ENCODE measurements at regions of chr5 and their contacts with region 1.

Region 1: GRCh38 chr5:149932445-149933350 is 11.9 kb downstream of the PDE6A start:
- DNase-seq: peak; percentile 13
- ATAC-seq: peak; percentile 95
- H3K4me3 ChIP-seq: peak overlapping the region in 2 of 3 experiments; percentile 32; a peak in 3 of 6 replicates
- H3K27ac ChIP-seq: no peak overlapping the region
- H3K4me1 ChIP-seq: peaks cover 34% of the 10 kb centered on the region
- H3K27me3 ChIP-seq: peaks cover 1 to 19% of the 10 kb centered on the region in 2 experiments; a peak in 3 of 5 replicates
- CTCF ChIP-seq: peak; percentile 83
- EP300 ChIP-seq: no peak
- POLR2A ChIP-seq: no peak
- RAD21 ChIP-seq: peak; percentile 61; the same call in 1 of the 2 replicates

Region 2: GRCh38 chr5:149860801-149861322 is 71.8 kb before region 1 on chr5:
- CTCF ChIA-PET with region 1: no interaction called
- POLR2A ChIA-PET with region 1: no interaction called
- in situ Hi-C with region 1: no loop called
- intact Hi-C with region 1: no loop called
- DNase-seq: no peak
- ATAC-seq: no peak
- H3K4me3 ChIP-seq: no peak overlapping the region
- H3K27ac ChIP-seq: no peak overlapping the region
- H3K4me1 ChIP-seq: no peaks in the 10 kb centered on the region
- H3K27me3 ChIP-seq: no peaks in the 10 kb centered on the region
- CTCF ChIP-seq: no peak
- EP300 ChIP-seq: no peak
- POLR2A ChIP-seq: no peak
- RAD21 ChIP-seq: no peak

Region 3: DNA sequence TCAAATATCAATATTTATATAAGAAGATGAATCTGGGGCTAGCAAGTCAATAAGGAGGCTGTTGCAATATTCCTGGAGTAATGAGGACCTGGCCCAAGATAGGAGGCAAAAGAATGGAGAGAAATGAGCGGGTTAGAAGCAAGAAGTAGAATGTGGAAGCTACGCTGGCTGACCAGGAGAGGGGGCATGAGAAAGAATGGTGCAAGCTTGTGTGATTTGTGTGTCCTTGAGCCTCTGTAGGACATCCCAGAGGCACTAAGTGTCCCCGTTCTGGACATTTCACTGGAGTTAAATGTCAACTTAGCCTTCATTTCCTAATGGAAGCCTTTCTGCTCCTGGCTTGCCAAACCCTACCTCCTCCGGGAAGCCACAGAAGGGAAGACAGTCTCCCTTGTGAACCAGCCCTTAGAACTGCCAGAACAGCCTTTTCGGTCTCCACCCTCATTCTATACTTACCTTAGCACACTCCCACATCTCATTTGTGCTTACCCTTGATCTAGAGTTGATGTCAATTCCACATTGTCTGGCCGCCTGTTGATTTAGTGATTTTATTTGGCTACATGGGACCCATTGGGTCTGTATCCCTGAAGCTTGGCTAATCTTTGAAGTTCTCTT is 18.5 kb after region 1 on chr5:
- CTCF ChIA-PET with region 1: interaction called, 3 read pairs
- POLR2A ChIA-PET with region 1: interaction called, 3 read pairs
- in situ Hi-C with region 1: no loop called
- intact Hi-C with region 1: loop called (anchors 2 kb)
- DNase-seq: peak; percentile 49
- ATAC-seq: peak; percentile 98
- H3K4me3 ChIP-seq: no peak overlapping the region
- H3K27ac ChIP-seq: no peak overlapping the region
- H3K4me1 ChIP-seq: peaks cover 8% of the 10 kb centered on the region
- H3K27me3 ChIP-seq: peaks cover 0 to 3% of the 10 kb centered on the region in 2 experiments; a peak in 1 of 5 replicates
- CTCF ChIP-seq: peak; percentile 61
- EP300 ChIP-seq: no peak
- POLR2A ChIP-seq: no peak
- RAD21 ChIP-seq: peak; percentile 32; the same call in 1 of the 2 replicates

Region 4: GRCh38 chr5:149960272-149961185 is 27.8 kb after region 1 on chr5 and contains the start of gene SLC26A2:
- CTCF ChIA-PET with region 1: interaction called, 10 read pairs
- POLR2A ChIA-PET with region 1: interaction called, 4 read pairs
- in situ Hi-C with region 1: no loop called
- intact Hi-C with region 1: loop called (anchors 1 kb)
- DNase-seq: peak; percentile 92
- ATAC-seq: peak; percentile 99
- H3K4me3 ChIP-seq: peak within 1 kb of the TSS; percentile 51 to 77 (median 69)
- H3K27ac ChIP-seq: peak within 1 kb of the TSS; percentile 52
- H3K4me1 ChIP-seq: peaks cover 50% of the 10 kb centered on the region
- H3K27me3 ChIP-seq: no peaks in the 10 kb centered on the region
- CTCF ChIP-seq: peak; percentile 17; the same call in 1 of the 2 replicates
- EP300 ChIP-seq: no peak
- POLR2A ChIP-seq: peak; percentile 85 to 91
- RAD21 ChIP-seq: peak; percentile 48; the same call in 1 of the 2 replicates
- total RNA-seq, gene SLC26A2: 6.3 and 7.9 TPM in 2 replicates

Region 5: GRCh38 chr5:150058480-150059126 is 125.9 kb after region 1 on chr5:
- CTCF ChIA-PET with region 1: no interaction called
- POLR2A ChIA-PET with region 1: no interaction called
- in situ Hi-C with region 1: no loop called
- intact Hi-C with region 1: no loop called
- DNase-seq: no peak
- ATAC-seq: no peak
- H3K4me3 ChIP-seq: no peak overlapping the region
- H3K27ac ChIP-seq: no peak overlapping the region
- H3K4me1 ChIP-seq: peaks cover 9% of the 10 kb centered on the region
- H3K27me3 ChIP-seq: peaks cover 0 to 7% of the 10 kb centered on the region in 2 experiments; a peak in 2 of 5 replicates
- CTCF ChIP-seq: no peak
- EP300 ChIP-seq: no peak
- POLR2A ChIP-seq: no peak
- RAD21 ChIP-seq: no peak